ENCODE measurements at regions of chr7 and their contacts with region 1.

Region 1: GRCh38 chr7:37234928-37235327 is 213.7 kb downstream of the ELMO1 start:
- DNase-seq: peak; percentile 42
- H3K4me3 Mint-ChIP-seq: no peak overlapping the region
- H3K27ac Mint-ChIP-seq: no peak overlapping the region
- H3K4me1 Mint-ChIP-seq: peaks cover 19% of the 10 kb centered on the region
- H3K27me3 Mint-ChIP-seq: peaks cover 30% of the 10 kb centered on the region
- CTCF ChIP-seq: peak; percentile 88

Region 2: DNA sequence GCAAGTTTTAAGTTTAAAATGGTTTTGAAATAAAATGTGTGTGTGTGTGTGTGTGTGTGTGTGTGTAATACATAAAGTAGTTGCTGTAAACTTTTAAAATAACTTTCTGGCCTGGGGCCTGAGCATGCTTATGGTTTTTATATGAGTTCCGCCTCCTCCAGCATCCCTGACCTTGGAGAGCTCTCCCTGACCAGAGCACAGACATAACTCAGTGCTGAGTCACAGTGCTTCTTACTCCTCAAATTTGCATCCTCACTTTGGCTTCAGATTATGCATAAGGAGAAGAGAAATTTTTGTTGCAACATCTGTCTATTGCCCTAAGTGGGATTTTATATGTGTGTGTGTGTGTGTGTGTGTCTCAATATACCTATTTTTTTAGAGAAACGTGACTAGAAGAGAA is 12.9 kb after region 1 on chr7:
- CTCF ChIA-PET with region 1: interaction called, 24 read pairs
- POLR2A ChIA-PET with region 1: interaction called, 3 read pairs
- intact Hi-C with region 1: no loop called
- DNase-seq: peak; percentile 69
- H3K4me3 Mint-ChIP-seq: no peak overlapping the region
- H3K27ac Mint-ChIP-seq: no peak overlapping the region
- H3K4me1 Mint-ChIP-seq: peaks cover 10% of the 10 kb centered on the region
- H3K27me3 Mint-ChIP-seq: no peaks in the 10 kb centered on the region
- CTCF ChIP-seq: no peak

Region 3: DNA sequence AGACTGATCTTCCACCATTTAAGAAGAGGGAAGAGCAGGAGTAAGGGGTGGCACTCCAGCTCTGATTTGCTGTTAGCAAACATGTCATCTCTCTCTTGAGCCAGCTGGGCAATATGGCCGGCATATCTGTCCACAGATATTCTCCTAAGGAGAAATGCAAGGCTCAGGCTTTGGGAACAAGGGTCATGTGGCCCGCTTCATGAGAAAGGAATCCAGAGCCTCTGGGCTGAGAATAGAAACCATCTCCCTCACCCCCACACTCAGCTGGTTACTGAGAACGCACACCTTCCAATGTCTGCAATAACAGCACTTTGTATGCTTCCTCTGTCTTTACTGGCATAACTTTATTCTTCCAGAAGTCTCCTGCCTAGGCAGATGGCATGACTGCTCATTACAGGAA is 42.6 kb after region 1 on chr7:
- CTCF ChIA-PET with region 1: no interaction called
- POLR2A ChIA-PET with region 1: no interaction called
- intact Hi-C with region 1: no loop called
- DNase-seq: no peak
- H3K4me3 Mint-ChIP-seq: no peak overlapping the region
- H3K27ac Mint-ChIP-seq: no peak overlapping the region
- H3K4me1 Mint-ChIP-seq: no peaks in the 10 kb centered on the region
- H3K27me3 Mint-ChIP-seq: no peaks in the 10 kb centered on the region
- CTCF ChIP-seq: no peak

Region 4: GRCh38 chr7:37504801-37505200 is 269.9 kb after region 1 on chr7:
- CTCF ChIA-PET with region 1: interaction called, 109 read pairs
- POLR2A ChIA-PET with region 1: interaction called, 3 read pairs
- intact Hi-C with region 1: no loop called
- DNase-seq: no peak
- H3K4me3 Mint-ChIP-seq: no peak overlapping the region
- H3K27ac Mint-ChIP-seq: no peak overlapping the region
- H3K4me1 Mint-ChIP-seq: peaks cover 5% of the 10 kb centered on the region
- H3K27me3 Mint-ChIP-seq: no peaks in the 10 kb centered on the region
- CTCF ChIP-seq: no peak

Region 5: DNA sequence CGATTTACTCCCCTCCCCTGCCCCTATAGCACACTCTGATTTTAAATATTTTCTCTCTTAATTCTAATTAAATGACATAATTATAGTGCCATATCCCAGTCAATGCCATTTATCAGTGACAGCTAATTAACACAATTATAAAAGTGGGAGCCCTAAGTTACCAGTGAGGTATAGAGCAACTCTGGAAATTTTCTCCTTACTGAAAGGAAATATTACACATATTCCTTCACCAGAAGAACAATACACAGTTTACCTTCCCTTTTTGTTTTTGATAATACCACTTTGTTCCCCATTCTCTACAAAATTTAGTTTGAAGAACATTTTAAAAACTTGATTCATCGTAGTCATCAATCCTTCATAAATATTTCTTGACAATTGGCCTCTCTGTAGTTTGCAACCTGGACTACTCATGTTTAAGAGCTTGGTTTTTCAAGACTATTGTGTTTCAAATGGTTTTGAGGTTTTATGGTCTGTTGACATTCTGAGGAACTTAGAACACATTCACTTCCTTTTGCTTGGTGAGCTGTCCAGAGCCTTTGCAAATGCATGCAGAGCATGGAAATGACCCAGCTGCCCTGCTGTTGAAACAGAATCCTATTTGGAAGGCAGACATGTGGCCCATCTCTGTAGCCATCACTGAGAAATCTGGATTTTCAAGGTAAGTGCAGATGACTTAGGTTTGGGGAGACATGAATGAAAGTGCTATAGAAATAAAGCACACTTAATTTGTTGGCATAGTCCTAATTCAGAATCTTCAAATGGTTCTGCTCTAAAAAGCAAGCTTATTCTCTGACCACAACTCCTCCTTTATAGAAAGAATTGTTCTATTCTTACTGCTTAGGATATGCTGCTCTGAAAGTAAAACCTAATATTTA is 448.6 kb after region 1 on chr7 and contains the start of gene GPR141:
- CTCF ChIA-PET with region 1: interaction called, 4 read pairs
- POLR2A ChIA-PET with region 1: no interaction called
- intact Hi-C with region 1: loop called (anchors 5 kb)
- DNase-seq: peak; percentile 56
- H3K4me3 Mint-ChIP-seq: no peak within 1 kb of the TSS
- H3K27ac Mint-ChIP-seq: peak within 1 kb of the TSS; percentile 73
- H3K4me1 Mint-ChIP-seq: peaks cover 13% of the 10 kb centered on the region
- H3K27me3 Mint-ChIP-seq: no peaks in the 10 kb centered on the region
- CTCF ChIP-seq: no peak
- total RNA-seq, gene GPR141: 2.4 and 2.8 TPM in 2 replicates

Region 6: GRCh38 chr7:37833107-37833817 is 598.3 kb after region 1 on chr7:
- CTCF ChIA-PET with region 1: interaction called, 135 read pairs
- POLR2A ChIA-PET with region 1: interaction called, 5 read pairs
- intact Hi-C with region 1: loop called (anchors 1 kb)
- DNase-seq: peak; percentile 72
- H3K4me3 Mint-ChIP-seq: peak overlapping the region; percentile 53
- H3K27ac Mint-ChIP-seq: no peak overlapping the region
- H3K4me1 Mint-ChIP-seq: peaks cover 13% of the 10 kb centered on the region
- H3K27me3 Mint-ChIP-seq: no peaks in the 10 kb centered on the region
- CTCF ChIP-seq: peak; percentile 56

Region 7: DNA sequence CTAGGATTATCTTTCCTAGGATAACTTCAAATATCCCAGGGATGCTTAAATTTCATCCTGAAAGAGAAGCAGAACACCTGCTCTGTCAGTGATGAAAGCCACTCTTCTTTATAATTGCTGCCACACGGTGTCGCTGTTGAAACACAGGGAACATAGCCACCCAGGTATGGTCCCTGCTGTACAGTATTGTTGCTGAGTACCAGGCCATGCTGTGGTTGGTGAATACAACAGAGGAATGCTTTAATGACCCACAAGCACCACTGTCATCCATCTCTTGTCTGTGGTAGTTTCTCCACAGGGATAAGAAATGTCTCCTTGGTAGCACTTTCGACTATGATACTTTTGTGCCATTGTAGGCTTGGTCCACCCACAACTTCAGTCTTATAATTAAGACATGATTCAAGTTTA is 872.6 kb after region 1 on chr7:
- CTCF ChIA-PET with region 1: interaction called, 4 read pairs
- POLR2A ChIA-PET with region 1: no interaction called
- intact Hi-C with region 1: loop called (anchors 1 kb)
- DNase-seq: peak; percentile 74
- H3K4me3 Mint-ChIP-seq: no peak overlapping the region
- H3K27ac Mint-ChIP-seq: no peak overlapping the region
- H3K4me1 Mint-ChIP-seq: no peaks in the 10 kb centered on the region
- H3K27me3 Mint-ChIP-seq: peaks cover 66% of the 10 kb centered on the region
- CTCF ChIP-seq: peak; percentile 68